GM18951 (cell line): ENCODE measurements at regions of chr17 and their contacts with region 1.

Region 1: DNA sequence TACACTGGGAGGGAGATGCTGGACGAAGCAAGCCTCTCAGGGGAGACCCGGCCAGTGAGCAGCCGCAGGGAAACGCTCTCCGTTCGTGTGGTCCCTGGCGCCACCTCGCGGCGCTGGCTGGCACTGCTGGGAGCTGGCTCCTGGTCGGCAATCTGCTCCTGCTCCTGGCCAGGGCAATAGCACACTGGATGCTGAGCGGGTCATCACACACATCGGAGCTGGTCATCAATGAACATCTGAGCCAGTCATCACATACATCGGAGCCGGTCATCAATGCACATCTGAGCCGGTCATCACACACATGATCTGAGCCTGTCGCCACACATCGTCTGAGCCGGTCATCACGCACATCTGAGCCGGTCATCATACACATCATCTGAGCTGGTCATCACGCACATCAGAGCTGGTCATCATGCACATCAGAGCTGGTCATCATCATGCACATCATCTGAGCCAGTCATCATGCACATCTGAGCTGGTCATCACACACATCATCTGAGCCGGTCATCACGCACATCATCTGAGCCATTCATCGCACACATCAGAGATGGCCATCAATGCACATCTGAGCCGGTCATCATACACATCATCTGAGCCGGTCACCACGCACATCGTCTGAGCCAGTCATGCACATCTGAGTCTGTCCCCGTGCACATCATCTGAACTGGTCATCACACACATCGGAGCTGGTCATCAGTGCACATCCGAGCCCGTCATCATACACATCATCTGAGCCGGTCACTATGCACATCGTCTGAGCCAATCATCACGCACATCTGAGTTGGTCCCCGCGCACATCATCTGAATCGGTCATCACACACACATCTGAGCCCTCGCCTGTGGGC is 217.3 kb downstream of the RBFOX3 start:
- POLR2A ChIP-seq: no peak

Region 2: DNA sequence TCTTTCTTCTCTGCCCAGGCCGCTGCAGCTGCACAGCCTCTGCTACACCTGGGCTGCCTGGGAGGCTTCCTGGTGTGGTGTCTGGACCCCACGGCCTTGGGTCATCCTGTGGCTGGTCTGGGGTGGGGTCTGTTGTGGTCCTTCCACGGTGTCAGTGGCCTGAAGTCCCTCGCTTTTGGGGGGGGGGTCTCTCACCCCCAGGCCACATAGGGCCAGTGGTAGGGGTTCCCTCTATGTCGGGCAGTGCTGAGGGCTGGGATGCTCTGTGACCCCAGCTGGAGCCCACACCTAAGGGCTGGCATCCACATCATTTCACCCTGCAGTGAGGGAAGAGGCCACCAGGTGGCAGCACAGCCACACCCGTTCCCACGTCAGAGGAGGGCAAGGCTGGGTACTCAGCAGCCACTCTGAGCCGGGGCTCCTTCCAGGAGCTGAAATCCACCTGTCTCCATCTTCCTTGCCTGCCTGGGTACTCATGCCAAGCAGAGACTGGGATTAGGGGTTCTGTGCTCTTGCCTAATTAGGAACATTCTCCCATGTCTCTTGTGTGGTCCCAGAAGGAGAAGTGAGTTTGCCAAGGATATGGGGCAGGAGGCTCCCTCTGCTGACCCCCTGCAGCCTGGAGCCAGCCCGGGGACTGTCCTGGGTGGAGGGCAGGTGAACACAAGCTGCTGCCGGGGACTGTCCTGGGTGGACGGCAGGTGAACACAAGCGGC is 306.0 kb before region 1 on chr17:
- in situ Hi-C with region 1: loop called (anchors 10 kb)
- POLR2A ChIP-seq: no peak

Region 3: GRCh38 chr17:79188048-79188447 is 205.5 kb before region 1 on chr17:
- in situ Hi-C with region 1: loop called (anchors 10 kb)
- POLR2A ChIP-seq: no peak

Region 4: GRCh38 chr17:79589669-79590522 is 196.3 kb after region 1 on chr17:
- in situ Hi-C with region 1: no loop called
- POLR2A ChIP-seq: no peak